Activated CD4-positive, alpha-beta T cell treated with anti-CD3 and anti-CD28 coated beads for 36 hours (primary cell): ENCODE measurements at regions of chr1 and their contacts with region 1.

Region 1: DNA sequence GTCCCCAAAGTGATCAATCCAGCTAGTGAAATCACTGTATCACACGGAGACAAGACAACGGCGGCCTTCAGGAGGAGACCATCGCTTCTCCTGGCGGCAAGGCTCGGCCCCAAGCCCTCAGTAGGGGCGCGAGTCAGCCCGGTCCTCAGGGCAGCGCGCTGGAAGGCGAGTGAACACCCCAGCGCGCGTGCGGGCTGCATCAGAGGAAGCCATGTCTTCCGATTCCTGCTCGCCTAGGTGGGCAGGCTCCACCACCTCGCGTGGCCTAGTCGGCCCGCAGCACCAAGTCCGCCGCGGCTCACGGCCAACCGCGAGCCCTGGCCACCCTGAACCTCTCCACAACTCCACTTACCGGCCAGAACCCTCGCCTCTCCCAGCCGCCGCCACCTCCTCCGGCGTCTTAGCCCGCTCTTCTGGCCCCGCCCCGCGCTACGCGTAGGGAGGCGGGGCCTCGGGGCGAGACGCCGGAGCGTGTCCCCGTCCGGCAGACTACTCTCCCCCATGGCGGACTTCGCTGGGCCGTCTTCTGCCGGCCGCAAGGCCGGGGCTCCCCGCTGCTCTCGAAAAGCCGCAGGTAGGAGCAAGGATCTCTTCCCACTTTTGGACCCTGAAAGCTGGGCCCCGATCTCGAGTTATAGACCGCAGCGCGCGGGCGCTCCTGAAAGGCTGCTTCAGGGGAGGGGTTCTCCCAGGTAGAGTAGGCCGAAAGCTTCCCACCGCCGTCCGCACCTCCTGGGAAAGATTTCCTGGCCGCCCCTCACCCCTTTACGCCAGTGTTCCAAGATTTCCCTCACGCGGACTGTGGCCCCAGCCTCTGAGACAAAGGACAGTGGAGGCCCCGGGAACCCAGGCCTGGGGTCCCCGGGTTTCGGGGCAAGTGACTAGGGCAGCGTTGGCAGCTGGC is at the starts of genes GLMN and RPAP2:
- DNase-seq: peak; percentile 83
- ATAC-seq: peak; percentile 98
- H3K4me3 Mint-ChIP-seq: peak within 1 kb of the TSS; percentile 84
- H3K27ac Mint-ChIP-seq: peak within 1 kb of the TSS; percentile 94
- H3K4me1 Mint-ChIP-seq: peaks cover 31% of the 10 kb centered on the region
- H3K27me3 Mint-ChIP-seq: no peaks in the 10 kb centered on the region
- total RNA-seq, gene GLMN: 10.8 to 17.6 TPM
- total RNA-seq, gene RPAP2: 33.4 to 39.0 TPM

Region 2: GRCh38 chr1:91282695-91283420 is 1016.0 kb before region 1 on chr1:
- CTCF ChIA-PET with region 1: interaction called, 5 read pairs
- POLR2A ChIA-PET with region 1: no interaction called
- intact Hi-C with region 1: loop called in 1 of 2 experiments (anchors 10 kb)
- DNase-seq: peak; percentile 64
- ATAC-seq: no peak
- H3K4me3 Mint-ChIP-seq: no peak overlapping the region
- H3K27ac Mint-ChIP-seq: no peak overlapping the region
- H3K4me1 Mint-ChIP-seq: no peaks in the 10 kb centered on the region
- H3K27me3 Mint-ChIP-seq: peaks cover 5% of the 10 kb centered on the region

Region 3: DNA sequence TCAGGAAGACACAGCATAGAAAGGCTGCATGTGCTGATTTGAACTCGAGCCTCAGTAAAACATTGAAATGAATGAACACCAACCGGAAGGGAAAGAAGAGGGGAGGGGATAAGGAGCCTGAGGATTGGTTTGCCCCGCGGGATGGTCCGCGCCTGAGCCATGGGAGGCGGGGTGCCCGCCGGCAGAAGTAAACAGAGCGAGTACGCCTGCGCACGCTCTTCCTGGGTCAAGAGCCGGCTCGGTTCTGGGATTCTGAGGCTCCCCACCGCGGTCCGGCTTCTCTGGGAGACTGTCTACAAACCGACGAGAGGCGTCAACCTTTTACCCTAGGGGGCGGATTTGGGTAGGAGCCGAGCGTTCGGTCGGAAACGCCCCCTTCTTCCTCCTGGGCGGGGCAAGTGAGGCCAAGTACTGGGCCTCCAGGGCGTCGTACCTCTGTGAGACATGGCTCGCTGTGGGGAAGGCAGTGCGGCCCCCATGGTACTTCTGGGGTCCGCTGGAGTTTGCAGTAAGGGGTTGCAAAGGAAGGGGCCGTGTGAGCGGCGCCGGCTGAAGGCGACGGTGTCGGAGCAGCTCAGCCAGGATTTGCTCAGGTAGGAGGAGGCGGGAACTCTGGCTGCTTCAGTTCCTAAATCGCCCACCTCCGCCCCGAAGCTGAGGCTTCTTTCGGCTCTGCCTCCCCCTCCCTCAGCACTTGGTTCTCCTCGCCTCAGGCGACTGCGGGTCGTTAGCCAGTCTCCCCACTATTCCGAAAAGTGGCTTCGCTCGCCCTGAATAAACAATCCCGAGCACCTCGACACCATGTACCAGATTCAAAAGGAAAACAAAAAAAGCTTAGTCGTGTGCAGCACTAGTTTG is 218.5 kb before region 1 on chr1 and contains the start of gene BTBD8:
- CTCF ChIA-PET with region 1: no interaction called
- POLR2A ChIA-PET with region 1: no interaction called
- intact Hi-C with region 1: loop called in 1 of 2 experiments (anchors 1 kb)
- DNase-seq: peak; percentile 90
- ATAC-seq: peak; percentile 96
- H3K4me3 Mint-ChIP-seq: peak within 1 kb of the TSS; percentile 84
- H3K27ac Mint-ChIP-seq: peak within 1 kb of the TSS; percentile 94
- H3K4me1 Mint-ChIP-seq: peaks cover 15% of the 10 kb centered on the region
- H3K27me3 Mint-ChIP-seq: no peaks in the 10 kb centered on the region
- total RNA-seq, gene BTBD8: 1.8 to 2.4 TPM

Region 4: DNA sequence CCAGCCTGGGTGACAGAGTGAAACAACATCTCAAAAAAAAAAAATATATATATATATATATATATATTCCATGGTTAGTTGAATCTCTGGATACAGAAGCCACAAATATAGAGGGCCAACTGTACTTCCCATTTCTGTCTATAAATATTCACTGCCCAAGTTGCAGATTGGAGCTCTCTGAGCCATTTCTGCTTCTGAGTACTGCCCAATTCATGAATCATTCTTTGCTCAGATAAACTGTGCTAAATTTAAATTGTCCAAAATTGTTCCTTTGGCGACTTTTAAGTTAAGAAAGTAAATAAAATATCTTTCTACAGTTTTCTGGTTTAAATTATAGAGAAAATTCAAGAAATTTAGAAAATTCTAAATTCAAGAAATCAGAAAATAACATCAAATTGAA is 104.3 kb before region 1 on chr1:
- CTCF ChIA-PET with region 1: no interaction called
- POLR2A ChIA-PET with region 1: no interaction called
- intact Hi-C with region 1: no loop called
- DNase-seq: no peak
- ATAC-seq: no peak
- H3K4me3 Mint-ChIP-seq: no peak overlapping the region
- H3K27ac Mint-ChIP-seq: no peak overlapping the region
- H3K4me1 Mint-ChIP-seq: peaks cover 4% of the 10 kb centered on the region
- H3K27me3 Mint-ChIP-seq: no peaks in the 10 kb centered on the region

Region 5: GRCh38 chr1:92310185-92310597 is 11.4 kb after region 1 on chr1:
- CTCF ChIA-PET with region 1: interaction called, 27 read pairs
- POLR2A ChIA-PET with region 1: no interaction called
- intact Hi-C with region 1: no loop called
- DNase-seq: no peak
- ATAC-seq: peak; percentile 34
- H3K4me3 Mint-ChIP-seq: no peak overlapping the region
- H3K27ac Mint-ChIP-seq: no peak overlapping the region
- H3K4me1 Mint-ChIP-seq: peaks cover 33% of the 10 kb centered on the region
- H3K27me3 Mint-ChIP-seq: no peaks in the 10 kb centered on the region

Region 6: GRCh38 chr1:92317836-92318493 is 19.1 kb after region 1 on chr1:
- CTCF ChIA-PET with region 1: interaction called, 15 read pairs
- POLR2A ChIA-PET with region 1: interaction called, 3 read pairs
- intact Hi-C with region 1: no loop called
- DNase-seq: no peak
- ATAC-seq: peak; percentile 65
- H3K4me3 Mint-ChIP-seq: no peak overlapping the region
- H3K27ac Mint-ChIP-seq: peak overlapping the region; percentile 52
- H3K4me1 Mint-ChIP-seq: peaks cover 58% of the 10 kb centered on the region
- H3K27me3 Mint-ChIP-seq: no peaks in the 10 kb centered on the region

Region 7: DNA sequence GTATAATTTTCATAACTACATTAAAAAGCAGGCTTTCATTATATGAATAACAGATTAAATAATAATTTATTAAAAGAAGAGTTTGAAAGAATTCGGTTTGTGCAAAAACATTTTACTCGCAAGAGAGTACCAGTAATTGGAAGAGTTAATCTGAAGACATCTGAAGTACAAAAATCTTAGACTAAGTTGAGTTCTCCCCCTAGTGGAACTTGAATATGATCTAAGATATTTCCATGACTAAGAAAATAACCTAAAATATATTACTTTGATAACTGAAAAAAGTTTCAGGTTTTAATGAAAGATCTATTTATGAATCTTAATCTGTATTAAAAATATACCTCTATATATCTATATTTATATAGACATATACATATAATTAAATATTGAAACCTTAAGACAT is 300.4 kb after region 1 on chr1:
- CTCF ChIA-PET with region 1: interaction called, 4 read pairs
- POLR2A ChIA-PET with region 1: no interaction called
- intact Hi-C with region 1: loop called in 1 of 2 experiments (anchors 5 kb)
- DNase-seq: no peak
- ATAC-seq: peak; percentile 66
- H3K4me3 Mint-ChIP-seq: no peak overlapping the region
- H3K27ac Mint-ChIP-seq: no peak overlapping the region
- H3K4me1 Mint-ChIP-seq: peaks cover 36% of the 10 kb centered on the region
- H3K27me3 Mint-ChIP-seq: no peaks in the 10 kb centered on the region

Region 8: GRCh38 chr1:92623187-92623778 is 324.5 kb after region 1 on chr1:
- CTCF ChIA-PET with region 1: interaction called, 6 read pairs
- POLR2A ChIA-PET with region 1: no interaction called
- intact Hi-C with region 1: loop called in 1 of 2 experiments (anchors 5 kb)
- DNase-seq: no peak
- ATAC-seq: peak; percentile 57
- H3K4me3 Mint-ChIP-seq: no peak overlapping the region
- H3K27ac Mint-ChIP-seq: no peak overlapping the region
- H3K4me1 Mint-ChIP-seq: peaks cover 14% of the 10 kb centered on the region
- H3K27me3 Mint-ChIP-seq: no peaks in the 10 kb centered on the region